CD4-positive, alpha-beta T cell (primary cell): ENCODE measurements at regions of chr22 and their contacts with region 1.

Region 1: DNA sequence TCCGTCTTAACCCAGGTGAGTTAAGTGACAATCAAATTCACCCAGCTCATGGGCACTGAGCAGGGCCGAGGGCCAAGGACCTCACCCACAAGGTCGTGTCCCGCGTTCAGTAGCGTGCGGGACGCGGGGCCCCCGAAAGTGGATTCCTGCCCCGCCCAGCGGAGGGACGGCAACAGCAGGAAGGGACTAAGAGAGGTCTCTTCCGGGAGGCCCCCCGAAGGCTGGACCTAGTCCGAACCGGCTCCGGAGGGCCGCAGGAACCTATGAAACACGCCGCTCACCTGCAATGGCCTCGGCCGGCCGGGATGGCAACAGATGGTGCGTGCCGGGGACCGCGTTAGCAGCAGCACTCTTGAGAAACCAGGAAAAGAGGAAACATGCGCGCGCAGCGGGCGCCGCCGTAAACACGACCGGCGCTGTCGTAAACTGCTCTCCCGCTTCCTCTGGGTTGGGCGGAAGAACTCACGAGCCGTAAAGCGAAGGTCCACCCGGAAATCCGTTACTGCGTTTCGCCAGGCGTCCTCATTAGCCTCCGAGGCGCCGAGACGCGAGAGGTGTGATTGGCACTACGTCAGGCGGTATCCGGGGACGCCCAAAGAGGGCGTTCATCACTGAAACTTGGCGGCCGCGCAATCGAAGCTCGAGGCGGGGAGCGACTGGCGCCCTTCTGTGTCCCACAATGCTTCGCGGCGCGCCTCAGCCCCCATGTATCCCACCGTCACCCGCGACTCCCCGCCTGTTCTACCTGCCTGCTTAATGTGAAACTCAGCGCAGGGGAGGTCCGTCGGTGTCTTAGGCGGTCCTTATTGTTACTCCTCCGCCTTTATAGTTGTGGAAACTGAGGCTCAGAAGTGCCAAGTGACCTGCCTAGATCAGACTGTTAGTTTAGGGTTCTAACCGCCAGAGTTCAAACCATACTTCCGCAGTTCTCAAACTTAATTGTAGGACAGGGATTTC is at the start of gene EIF3D:
- DNase-seq: peak; percentile 95 to 100 (median 98)
- ATAC-seq: peak; percentile 91
- H3K4me3 ChIP-seq: peak within 1 kb of the TSS; percentile 95
- H3K4me3 Mint-ChIP-seq: peak within 1 kb of the TSS; percentile 92
- H3K27ac ChIP-seq: peak within 1 kb of the TSS; percentile 87 to 94
- H3K27ac Mint-ChIP-seq: peak within 1 kb of the TSS; percentile 93
- H3K4me1 ChIP-seq: peaks cover 19% of the 10 kb centered on the region
- H3K4me1 Mint-ChIP-seq: peaks cover 26% of the 10 kb centered on the region
- H3K27me3 ChIP-seq: no peaks in the 10 kb centered on the region
- H3K27me3 Mint-ChIP-seq: no peaks in the 10 kb centered on the region
- CTCF ChIP-seq: no peak
- total RNA-seq, gene EIF3D: 285 to 286 TPM

Region 2: GRCh38 chr22:35648066-35649025 is 880.7 kb before region 1 on chr22 and contains the start of gene APOL6:
- CTCF ChIA-PET with region 1: no interaction called
- POLR2A ChIA-PET with region 1: interaction called, 11 read pairs
- intact Hi-C with region 1: no loop called
- DNase-seq: peak; percentile 24 to 92 (median 54)
- ATAC-seq: peak; percentile 79
- H3K4me3 ChIP-seq: peak within 1 kb of the TSS; percentile 76
- H3K4me3 Mint-ChIP-seq: peak within 1 kb of the TSS; percentile 100
- H3K27ac ChIP-seq: peak within 1 kb of the TSS; percentile 82 to 98
- H3K27ac Mint-ChIP-seq: peak within 1 kb of the TSS; percentile 98
- H3K4me1 ChIP-seq: peaks cover 35% of the 10 kb centered on the region
- H3K4me1 Mint-ChIP-seq: peaks cover 47% of the 10 kb centered on the region
- H3K27me3 ChIP-seq: no peaks in the 10 kb centered on the region
- H3K27me3 Mint-ChIP-seq: no peaks in the 10 kb centered on the region
- CTCF ChIP-seq: no peak
- total RNA-seq, gene APOL6: 39.3 TPM

Region 3: DNA sequence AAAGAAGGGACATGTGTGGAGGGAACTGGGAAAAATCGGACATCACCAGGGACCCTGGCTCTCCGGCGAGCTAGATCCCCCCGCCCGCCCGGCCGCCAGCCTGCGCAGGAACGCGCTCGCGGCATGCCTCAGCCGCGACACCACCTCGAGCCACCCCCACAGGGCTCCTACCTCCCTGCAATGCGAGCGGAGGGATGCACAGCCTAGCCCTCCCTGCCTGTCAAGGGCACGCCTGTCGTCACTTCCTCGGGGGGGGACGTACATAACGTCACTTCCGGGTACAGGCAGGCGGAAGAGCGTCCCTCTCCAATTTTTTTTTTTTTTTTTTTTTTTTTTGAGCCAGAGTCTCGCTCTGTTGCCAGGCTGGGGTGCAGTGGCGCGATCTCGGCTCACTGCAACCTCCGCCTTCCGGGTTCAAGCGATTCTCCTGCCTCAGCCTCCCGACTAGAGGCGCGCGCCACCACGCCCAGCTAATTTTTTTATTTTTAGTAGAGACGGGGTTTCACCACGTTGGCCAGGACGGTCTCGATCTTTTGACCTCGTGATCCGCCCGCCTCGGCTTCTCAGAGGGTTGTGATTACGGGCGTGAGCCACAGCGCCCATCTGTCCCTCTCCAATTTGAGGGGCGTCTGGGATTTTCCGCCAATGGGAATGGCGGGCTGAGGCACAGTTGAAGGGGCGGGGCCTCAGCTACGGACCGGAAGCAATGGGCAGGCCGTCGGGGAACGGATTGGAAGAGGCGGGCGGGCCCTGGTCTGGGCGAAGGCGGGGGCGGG is 47.5 kb before region 1 on chr22 and contains the start of gene TXN2:
- CTCF ChIA-PET with region 1: no interaction called
- POLR2A ChIA-PET with region 1: interaction called, 16 read pairs
- intact Hi-C with region 1: loop called (anchors 1 kb)
- DNase-seq: peak; percentile 92 to 98 (median 96)
- ATAC-seq: peak; percentile 87
- H3K4me3 ChIP-seq: peak within 1 kb of the TSS; percentile 67
- H3K4me3 Mint-ChIP-seq: peak within 1 kb of the TSS; percentile 95
- H3K27ac ChIP-seq: peak within 1 kb of the TSS; percentile 94 to 99
- H3K27ac Mint-ChIP-seq: peak within 1 kb of the TSS; percentile 92
- H3K4me1 ChIP-seq: peaks cover 22% of the 10 kb centered on the region
- H3K4me1 Mint-ChIP-seq: peaks cover 22% of the 10 kb centered on the region
- H3K27me3 ChIP-seq: no peaks in the 10 kb centered on the region
- H3K27me3 Mint-ChIP-seq: no peaks in the 10 kb centered on the region
- CTCF ChIP-seq: no peak
- total RNA-seq, gene TXN2: 26.4 to 26.5 TPM

Region 4: DNA sequence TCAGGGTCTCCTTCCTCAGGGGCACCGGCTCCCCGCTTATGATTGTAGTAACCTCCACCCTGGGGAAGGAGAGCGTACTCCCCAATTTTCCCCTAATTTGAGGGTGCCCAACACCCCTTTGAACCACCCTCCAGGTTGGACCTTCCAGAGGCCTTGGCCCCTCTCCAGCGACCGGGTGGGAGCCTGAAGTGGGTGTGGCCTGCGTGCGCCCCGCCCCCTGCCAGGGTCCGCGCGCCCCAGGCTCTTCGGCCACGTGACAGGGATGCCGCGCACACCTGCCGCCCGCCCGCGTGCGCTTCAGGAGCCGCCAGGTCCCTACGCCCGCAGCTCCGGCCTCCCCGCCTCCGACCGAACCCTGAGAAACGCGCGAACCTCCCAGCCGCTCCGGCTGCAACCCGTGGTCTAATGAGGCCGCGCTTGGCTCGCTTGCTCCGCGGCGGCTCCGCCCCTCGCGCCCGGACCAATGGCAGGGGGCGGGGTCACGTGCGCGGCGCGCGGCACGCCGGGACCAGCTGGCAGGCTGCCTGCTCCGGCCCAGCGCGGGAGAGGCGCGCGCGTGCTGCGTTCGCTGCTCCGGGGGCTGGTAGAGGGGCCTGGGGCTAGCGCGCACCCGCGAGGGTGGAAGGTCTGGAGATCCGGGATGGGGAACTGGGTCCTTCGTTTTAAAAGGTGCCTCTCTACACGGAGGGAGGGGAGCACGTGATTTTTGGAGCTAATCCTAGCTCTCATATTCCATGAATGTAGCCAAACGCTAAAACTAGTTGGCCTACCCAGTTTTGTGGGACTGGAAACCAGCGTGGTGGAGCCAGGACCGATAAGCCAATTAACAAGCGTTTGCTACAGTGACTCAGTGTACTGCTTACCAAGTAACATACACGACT is 22.2 kb before region 1 on chr22 and contains the start of gene FOXRED2:
- CTCF ChIA-PET with region 1: interaction called, 4 read pairs
- POLR2A ChIA-PET with region 1: interaction called, 27 read pairs
- intact Hi-C with region 1: loop called (anchors 2 kb)
- DNase-seq: peak; percentile 78 to 96 (median 86)
- ATAC-seq: peak; percentile 96
- H3K4me3 ChIP-seq: peak within 1 kb of the TSS; percentile 56
- H3K4me3 Mint-ChIP-seq: peak within 1 kb of the TSS; percentile 73
- H3K27ac ChIP-seq: peak within 1 kb of the TSS; percentile 18 to 48
- H3K27ac Mint-ChIP-seq: peak within 1 kb of the TSS; percentile 18
- H3K4me1 ChIP-seq: peaks cover 15% of the 10 kb centered on the region
- H3K4me1 Mint-ChIP-seq: peaks cover 12% of the 10 kb centered on the region
- H3K27me3 ChIP-seq: no peaks in the 10 kb centered on the region
- H3K27me3 Mint-ChIP-seq: no peaks in the 10 kb centered on the region
- CTCF ChIP-seq: no peak
- total RNA-seq, gene FOXRED2: 1.8 to 2.3 TPM

Region 5: GRCh38 chr22:36663561-36663960 is 134.5 kb after region 1 on chr22:
- CTCF ChIA-PET with region 1: no interaction called
- POLR2A ChIA-PET with region 1: no interaction called
- intact Hi-C with region 1: no loop called
- DNase-seq: no peak
- ATAC-seq: no peak
- H3K4me3 ChIP-seq: no peak overlapping the region
- H3K4me3 Mint-ChIP-seq: no peak overlapping the region
- H3K27ac ChIP-seq: no peak overlapping the region
- H3K27ac Mint-ChIP-seq: no peak overlapping the region
- H3K4me1 ChIP-seq: no peaks in the 10 kb centered on the region
- H3K4me1 Mint-ChIP-seq: no peaks in the 10 kb centered on the region
- H3K27me3 ChIP-seq: peaks cover 0 to 13% of the 10 kb centered on the region in 2 experiments
- H3K27me3 Mint-ChIP-seq: peaks cover 82% of the 10 kb centered on the region
- CTCF ChIP-seq: no peak

Region 6: GRCh38 chr22:36977947-36978660 is 449.0 kb after region 1 on chr22:
- CTCF ChIA-PET with region 1: no interaction called
- POLR2A ChIA-PET with region 1: interaction called, 3 read pairs
- intact Hi-C with region 1: loop called in 1 of 2 experiments (anchors 5 kb)
- DNase-seq: peak; percentile 83 to 95 (median 88)
- ATAC-seq: peak; percentile 88
- H3K4me3 ChIP-seq: peak overlapping the region; percentile 77
- H3K4me3 Mint-ChIP-seq: peak overlapping the region; percentile 97
- H3K27ac ChIP-seq: peak overlapping the region; percentile 16 to 62
- H3K27ac Mint-ChIP-seq: peak overlapping the region; percentile 92
- H3K4me1 ChIP-seq: peaks cover 15% of the 10 kb centered on the region
- H3K4me1 Mint-ChIP-seq: peaks cover 8% of the 10 kb centered on the region
- H3K27me3 ChIP-seq: peaks cover 0 to 5% of the 10 kb centered on the region in 2 experiments
- H3K27me3 Mint-ChIP-seq: peaks cover 5% of the 10 kb centered on the region
- CTCF ChIP-seq: peak; percentile 88